PC-9 (cell line): ENCODE measurements at regions of chr13 and their contacts with region 1.

Region 1: GRCh38 chr13:106899439-106899838 is 331.5 kb upstream of the ARGLU1 start:
- DNase-seq: peak; percentile 23 to 86
- H3K4me3 ChIP-seq: no peak overlapping the region
- H3K27ac ChIP-seq: no peak overlapping the region
- H3K4me1 ChIP-seq: peaks cover 17% of the 10 kb centered on the region
- H3K27me3 ChIP-seq: no peaks in the 10 kb centered on the region
- CTCF ChIP-seq: no peak

Region 2: GRCh38 chr13:105389373-105389772 is 1510.1 kb before region 1 on chr13:
- CTCF ChIA-PET with region 1: no interaction called
- POLR2A ChIA-PET with region 1: no interaction called
- intact Hi-C with region 1: no loop called
- DNase-seq: no peak
- H3K4me3 ChIP-seq: no peak overlapping the region
- H3K27ac ChIP-seq: no peak overlapping the region
- H3K4me1 ChIP-seq: no peaks in the 10 kb centered on the region
- H3K27me3 ChIP-seq: no peaks in the 10 kb centered on the region
- CTCF ChIP-seq: no peak

Region 3: DNA sequence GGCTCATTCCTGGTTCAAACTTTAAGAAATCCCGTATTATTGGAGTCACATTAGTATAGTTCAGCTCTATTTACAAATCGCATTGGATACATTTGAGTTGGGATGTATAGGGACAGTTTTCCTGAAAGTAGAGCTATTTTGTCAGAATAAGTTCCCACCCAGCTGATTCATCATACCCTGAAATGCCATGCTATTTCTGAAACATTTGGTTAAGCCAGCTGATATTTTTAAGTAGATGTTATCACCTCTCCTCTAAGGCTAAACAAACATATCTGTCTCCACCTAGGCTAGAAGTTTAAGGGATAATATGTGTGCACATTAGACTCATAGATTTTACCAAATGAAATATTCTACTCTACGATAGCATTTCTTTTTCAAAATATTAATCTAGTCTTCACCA is 105.3 kb before region 1 on chr13:
- CTCF ChIA-PET with region 1: no interaction called
- POLR2A ChIA-PET with region 1: no interaction called
- intact Hi-C with region 1: loop called (anchors 5 kb)
- DNase-seq: no peak
- H3K4me3 ChIP-seq: no peak overlapping the region
- H3K27ac ChIP-seq: no peak overlapping the region
- H3K4me1 ChIP-seq: peaks cover 19% of the 10 kb centered on the region
- H3K27me3 ChIP-seq: no peaks in the 10 kb centered on the region
- CTCF ChIP-seq: no peak

Region 4: GRCh38 chr13:106917673-106918556 is 18.5 kb after region 1 on chr13:
- CTCF ChIA-PET with region 1: no interaction called
- POLR2A ChIA-PET with region 1: no interaction called
- intact Hi-C with region 1: no loop called
- DNase-seq: peak; percentile 59 to 85
- H3K4me3 ChIP-seq: peak overlapping the region; percentile 76
- H3K27ac ChIP-seq: peak overlapping the region; percentile 60
- H3K4me1 ChIP-seq: peaks cover 14% of the 10 kb centered on the region
- H3K27me3 ChIP-seq: no peaks in the 10 kb centered on the region
- CTCF ChIP-seq: peak; percentile 97